Posterior cingulate gyrus (tissue), 11 donors: ENCODE measurements at regions of chr11 and their contacts with region 1.

Region 1: GRCh38 chr11:68610452-68611116 is 73.8 kb upstream of the GAL start:
- DNase-seq: no peak

Region 2: DNA sequence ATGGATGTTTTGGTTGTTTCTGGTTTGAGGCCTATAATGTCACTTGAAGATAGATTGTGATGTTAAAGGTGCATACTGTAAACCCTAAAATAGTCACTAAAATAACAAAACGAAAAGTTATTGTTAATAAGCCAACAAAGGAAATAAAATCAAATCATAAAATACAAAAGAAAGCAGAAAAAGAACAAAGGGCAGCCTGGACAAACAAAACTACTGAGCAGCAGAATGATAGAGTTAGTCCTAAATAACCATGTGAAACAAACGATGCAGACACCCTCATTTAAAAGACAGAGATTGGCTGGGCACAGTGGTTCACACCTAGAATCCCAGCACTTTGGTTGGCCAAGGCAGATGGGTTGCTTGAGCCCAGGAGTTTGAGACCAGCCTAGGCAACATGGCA is 17.1 kb before region 1 on chr11:
- intact Hi-C with region 1: loop called (anchors 1 kb)
- DNase-seq: no peak